ENCODE measurements at regions of chrX and their contacts with region 1.

Region 1: DNA sequence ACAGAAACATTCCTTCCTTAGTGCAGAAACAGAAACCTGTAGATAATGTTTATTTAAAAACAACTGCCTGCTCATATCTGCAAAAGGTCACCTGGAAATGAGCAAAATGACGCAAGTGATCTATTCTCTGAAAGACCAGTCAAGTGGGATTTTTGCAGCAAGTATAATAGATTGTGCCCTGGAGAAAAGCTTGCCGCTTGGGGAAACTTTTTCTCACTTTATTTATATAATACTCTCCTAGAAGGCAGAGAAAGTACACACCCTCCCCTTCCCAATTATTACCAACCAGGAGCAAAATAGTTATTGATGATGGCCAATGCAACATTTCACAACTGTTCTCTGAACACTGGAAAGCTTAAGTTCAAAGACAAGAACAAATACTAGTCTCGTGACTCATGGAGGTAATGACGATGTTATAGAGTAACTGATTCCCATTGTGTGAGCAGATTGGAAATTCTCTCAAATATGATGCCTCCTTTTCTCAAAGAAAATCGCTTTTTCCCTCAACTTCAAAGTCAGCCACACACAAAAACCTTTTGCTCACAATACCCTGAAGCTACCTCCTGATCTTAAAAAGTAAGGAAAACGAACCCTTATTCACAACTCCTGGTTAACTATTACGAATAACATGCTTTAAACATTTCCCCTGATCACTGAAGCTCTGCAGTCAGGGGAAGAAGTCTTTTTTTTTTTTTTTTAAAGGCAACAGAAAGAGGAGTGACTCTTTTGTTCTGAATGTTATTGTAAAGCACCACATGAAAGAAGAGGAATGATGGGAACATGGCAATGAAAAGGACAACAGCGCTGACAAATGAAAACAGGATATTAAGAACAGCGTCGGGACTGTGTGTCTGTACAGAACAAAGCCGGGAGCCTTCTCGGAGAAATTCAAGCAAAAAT is 41.0 kb downstream of the MID1 start:
- DNase-seq: no peak
- H3K27ac ChIP-seq: no peak overlapping the region
- CTCF ChIP-seq: no peak

Region 2: DNA sequence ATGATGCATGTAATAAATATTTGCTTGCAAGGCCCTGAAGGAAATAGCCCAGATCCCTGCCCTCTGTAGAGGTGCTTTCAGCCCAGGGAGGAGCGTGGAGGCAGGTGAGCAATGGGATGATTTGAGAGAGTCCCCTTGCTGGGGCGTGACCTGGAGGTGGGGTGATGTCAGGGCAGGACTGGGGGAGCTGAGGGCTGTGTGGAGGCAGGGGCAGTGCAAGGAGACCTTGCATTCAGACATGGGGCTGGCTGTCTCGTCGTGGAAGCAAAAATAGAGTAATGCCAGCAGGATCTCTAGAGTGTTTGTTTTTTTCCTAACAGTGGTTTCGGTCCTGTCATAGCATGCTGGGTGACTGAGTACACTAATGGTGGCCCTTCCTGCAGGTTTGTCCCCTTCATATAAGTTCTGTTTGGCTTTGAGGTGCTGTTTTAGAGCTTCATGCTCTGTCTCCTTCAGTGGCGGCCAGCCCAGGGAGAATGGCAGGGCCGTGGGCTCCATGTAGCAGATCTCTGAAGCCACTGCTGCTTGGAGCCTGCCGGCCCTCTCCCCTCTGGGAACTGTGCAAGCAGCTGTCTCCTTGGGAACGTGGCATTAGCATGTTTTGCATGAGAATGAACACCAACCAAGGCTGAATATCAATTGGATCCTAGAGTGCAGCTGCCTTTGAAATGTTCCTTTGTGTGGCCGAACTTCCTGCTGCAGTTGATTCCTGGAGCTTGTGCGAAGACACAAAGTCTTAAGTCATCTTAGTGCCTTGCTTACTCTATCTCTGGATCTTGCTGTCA is 651.5 kb before region 1 on chrX:
- CTCF ChIA-PET with region 1: interaction called, 10 read pairs
- POLR2A ChIA-PET with region 1: no interaction called
- DNase-seq: no peak
- H3K27ac ChIP-seq: no peak overlapping the region
- CTCF ChIP-seq: no peak

Region 3: GRCh38 chrX:10467793-10468192 is 111.6 kb before region 1 on chrX:
- CTCF ChIA-PET with region 1: no interaction called
- POLR2A ChIA-PET with region 1: no interaction called
- DNase-seq: no peak
- H3K27ac ChIP-seq: no peak overlapping the region
- CTCF ChIP-seq: no peak

Region 4: DNA sequence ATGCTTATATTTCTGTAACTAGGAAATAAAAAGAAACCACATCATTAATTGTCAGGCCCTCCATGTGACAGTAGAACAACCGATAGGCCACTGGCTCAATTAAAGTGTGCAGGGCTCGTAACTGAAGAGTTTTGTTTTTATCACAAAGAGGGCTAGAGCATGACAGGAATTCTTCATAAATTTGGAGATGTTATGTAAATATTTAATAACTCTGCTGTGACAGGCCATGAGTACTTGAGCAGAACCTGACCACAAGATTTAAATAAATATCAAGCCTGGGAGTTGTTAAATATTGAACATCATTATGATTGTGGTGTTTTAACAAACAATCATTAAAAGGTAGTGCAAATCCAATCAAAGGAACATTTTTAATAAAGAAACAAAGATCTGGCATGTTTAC is 14.8 kb before region 1 on chrX:
- CTCF ChIA-PET with region 1: no interaction called
- POLR2A ChIA-PET with region 1: no interaction called
- DNase-seq: no peak
- H3K27ac ChIP-seq: no peak overlapping the region
- CTCF ChIP-seq: no peak

Region 5: DNA sequence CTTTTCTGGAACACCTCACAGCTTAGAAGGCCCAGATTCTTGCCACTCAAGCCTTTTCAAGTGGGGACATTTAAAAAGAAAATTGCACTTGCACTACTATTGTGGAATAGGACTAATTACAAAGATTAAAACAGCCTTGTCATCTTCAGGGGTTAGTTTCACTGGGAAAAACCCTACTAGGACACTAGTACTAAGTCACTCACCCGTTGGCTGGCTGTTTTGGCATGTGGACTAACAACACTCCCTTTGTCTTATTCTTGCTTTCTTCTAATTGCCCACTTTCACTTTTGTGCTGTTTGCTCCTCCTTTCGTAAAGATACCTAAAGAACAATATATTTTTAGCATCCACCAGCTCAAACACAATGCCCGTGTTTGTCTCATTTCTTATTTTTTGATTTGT is 241.9 kb after region 1 on chrX:
- CTCF ChIA-PET with region 1: no interaction called
- POLR2A ChIA-PET with region 1: no interaction called
- DNase-seq: no peak
- H3K27ac ChIP-seq: no peak overlapping the region
- CTCF ChIP-seq: no peak